ENCODE measurements at regions of chr2 and their contacts with region 1.

Region 1: GRCh38 chr2:236569573-236569973 is at the start of gene ACKR3:
- DNase-seq: peak; percentile 32 to 89 (median 81)
- ATAC-seq: peak; percentile 97
- H3K4me3 ChIP-seq: peak within 1 kb of the TSS; percentile 62
- H3K4me3 Mint-ChIP-seq: peak within 1 kb of the TSS; percentile 52 to 95 (median 88)
- H3K27ac ChIP-seq: peak within 1 kb of the TSS; percentile 37
- H3K27ac Mint-ChIP-seq: peak within 1 kb of the TSS in 7 of 9 donors; percentile 19 to 86 (median 72)
- H3K4me1 ChIP-seq: peaks cover 9 to 13% of the 10 kb centered on the region in 2 donors
- H3K4me1 Mint-ChIP-seq: peaks cover 20 to 39% (median 25%) of the 10 kb centered on the region in 7 donors
- H3K27me3 ChIP-seq: no peaks in the 10 kb centered on the region
- H3K27me3 Mint-ChIP-seq: peaks cover 0 to 21% (median 0%) of the 10 kb centered on the region in 5 donors
- total RNA-seq, gene ACKR3: 2.8 to 6.2 (median 4.9) TPM

Region 2: DNA sequence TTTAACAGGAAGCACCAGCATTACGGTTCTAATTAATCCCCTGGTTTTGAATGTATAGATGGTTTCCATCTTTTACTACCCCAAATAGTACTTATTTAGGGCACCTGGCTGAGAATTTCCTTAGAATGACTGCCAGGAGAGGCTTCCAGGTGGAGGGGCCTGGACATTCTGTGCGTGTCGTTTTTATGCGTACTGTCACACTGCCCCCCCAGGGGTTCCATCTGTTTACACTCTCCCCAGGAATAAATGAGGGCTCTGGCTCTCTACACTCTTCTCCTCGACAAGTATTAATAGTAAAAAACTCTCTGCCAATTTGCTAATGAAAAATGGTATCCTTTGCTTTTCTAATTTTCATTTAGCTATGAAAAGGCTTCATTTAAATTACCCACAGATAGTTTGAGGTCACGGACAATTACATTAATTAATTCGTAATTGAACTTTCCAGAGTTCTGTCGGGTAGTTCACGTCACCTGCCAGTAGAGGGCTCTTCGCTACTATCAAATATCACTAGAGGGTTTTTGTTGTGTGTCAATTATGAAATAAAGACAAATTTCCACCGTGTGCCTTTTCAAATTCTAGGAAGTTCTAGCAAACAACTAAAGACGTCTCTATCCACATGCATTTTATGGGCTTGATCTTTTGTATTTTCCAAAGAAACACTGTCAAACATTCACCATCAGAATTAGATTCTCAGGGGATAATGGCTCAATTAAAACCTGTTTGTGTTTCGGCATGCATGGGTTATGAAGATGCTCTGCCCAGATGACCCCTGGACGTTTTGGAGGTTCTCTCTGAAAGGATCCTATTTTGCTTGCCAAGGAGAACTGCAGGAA is 216.6 kb before region 1 on chr2:
- CTCF ChIA-PET with region 1: interaction called, 10 read pairs
- POLR2A ChIA-PET with region 1: no interaction called
- intact Hi-C with region 1: loop called (anchors 1 kb)
- DNase-seq: peak in 5 of 9 donors; percentile 29 to 48 (median 45)
- ATAC-seq: peak; percentile 50
- H3K4me3 ChIP-seq: no peak overlapping the region
- H3K4me3 Mint-ChIP-seq: no peak overlapping the region
- H3K27ac ChIP-seq: no peak overlapping the region
- H3K27ac Mint-ChIP-seq: peak overlapping the region in 1 of 9 donors; percentile 59
- H3K4me1 ChIP-seq: no peaks in the 10 kb centered on the region
- H3K4me1 Mint-ChIP-seq: peaks cover 0 to 7% (median 4%) of the 10 kb centered on the region in 7 donors
- H3K27me3 ChIP-seq: no peaks in the 10 kb centered on the region
- H3K27me3 Mint-ChIP-seq: peaks cover 0 to 14% (median 8%) of the 10 kb centered on the region in 5 donors

Region 3: DNA sequence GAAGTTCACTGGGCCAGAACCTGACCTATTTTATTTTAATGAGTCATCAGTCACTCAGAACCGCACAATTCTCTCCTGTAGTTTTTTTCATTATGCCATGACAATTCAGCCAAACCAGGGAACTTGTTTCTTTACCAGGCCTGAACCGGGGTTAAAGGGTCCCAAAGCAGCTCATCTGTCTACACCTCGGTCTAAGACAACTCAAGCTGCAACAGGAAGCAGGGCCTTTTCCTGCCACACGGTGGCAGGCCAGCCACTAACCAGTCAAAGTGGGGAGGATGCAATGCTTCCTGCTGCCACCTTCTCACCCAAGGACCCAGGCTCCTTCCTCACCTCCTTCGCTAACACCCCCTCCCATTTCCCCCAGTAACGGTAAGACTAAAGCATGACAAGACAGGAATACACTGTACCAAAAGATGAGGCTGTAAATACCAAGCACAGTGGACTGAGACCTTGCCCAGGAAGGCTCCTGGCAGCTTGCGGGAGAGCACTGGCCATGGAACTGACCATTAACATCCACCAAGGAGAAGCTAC is 56.6 kb before region 1 on chr2:
- CTCF ChIA-PET with region 1: interaction called, 156 read pairs
- POLR2A ChIA-PET with region 1: interaction called, 19 read pairs
- intact Hi-C with region 1: loop called (anchors 1 kb)
- DNase-seq: peak; percentile 44 to 74 (median 63)
- ATAC-seq: peak; percentile 94
- H3K4me3 ChIP-seq: no peak overlapping the region
- H3K4me3 Mint-ChIP-seq: no peak overlapping the region
- H3K27ac ChIP-seq: no peak overlapping the region
- H3K27ac Mint-ChIP-seq: no peak overlapping the region
- H3K4me1 ChIP-seq: peaks cover 4% of the 10 kb centered on the region in 2 donors
- H3K4me1 Mint-ChIP-seq: peaks cover 0 to 5% (median 0%) of the 10 kb centered on the region in 7 donors
- H3K27me3 ChIP-seq: no peaks in the 10 kb centered on the region
- H3K27me3 Mint-ChIP-seq: peaks cover 0 to 36% (median 0%) of the 10 kb centered on the region in 5 donors

Region 4: GRCh38 chr2:236545814-236546480 is 23.6 kb before region 1 on chr2:
- CTCF ChIA-PET with region 1: interaction called, 7 read pairs
- POLR2A ChIA-PET with region 1: interaction called, 10 read pairs
- intact Hi-C with region 1: loop called (anchors 1 kb)
- DNase-seq: peak in 3 of 9 donors; percentile 23 to 36 (median 32)
- ATAC-seq: peak; percentile 74
- H3K4me3 ChIP-seq: peak overlapping the region; percentile 34
- H3K4me3 Mint-ChIP-seq: peak overlapping the region; percentile 49 to 85 (median 68)
- H3K27ac ChIP-seq: peak overlapping the region; percentile 72
- H3K27ac Mint-ChIP-seq: peak overlapping the region; percentile 77 to 96 (median 92)
- H3K4me1 ChIP-seq: peaks cover 60% of the 10 kb centered on the region in 2 donors
- H3K4me1 Mint-ChIP-seq: peaks cover 71 to 97% (median 95%) of the 10 kb centered on the region in 7 donors
- H3K27me3 ChIP-seq: no peaks in the 10 kb centered on the region
- H3K27me3 Mint-ChIP-seq: no peaks in the 10 kb centered on the region

Region 5: DNA sequence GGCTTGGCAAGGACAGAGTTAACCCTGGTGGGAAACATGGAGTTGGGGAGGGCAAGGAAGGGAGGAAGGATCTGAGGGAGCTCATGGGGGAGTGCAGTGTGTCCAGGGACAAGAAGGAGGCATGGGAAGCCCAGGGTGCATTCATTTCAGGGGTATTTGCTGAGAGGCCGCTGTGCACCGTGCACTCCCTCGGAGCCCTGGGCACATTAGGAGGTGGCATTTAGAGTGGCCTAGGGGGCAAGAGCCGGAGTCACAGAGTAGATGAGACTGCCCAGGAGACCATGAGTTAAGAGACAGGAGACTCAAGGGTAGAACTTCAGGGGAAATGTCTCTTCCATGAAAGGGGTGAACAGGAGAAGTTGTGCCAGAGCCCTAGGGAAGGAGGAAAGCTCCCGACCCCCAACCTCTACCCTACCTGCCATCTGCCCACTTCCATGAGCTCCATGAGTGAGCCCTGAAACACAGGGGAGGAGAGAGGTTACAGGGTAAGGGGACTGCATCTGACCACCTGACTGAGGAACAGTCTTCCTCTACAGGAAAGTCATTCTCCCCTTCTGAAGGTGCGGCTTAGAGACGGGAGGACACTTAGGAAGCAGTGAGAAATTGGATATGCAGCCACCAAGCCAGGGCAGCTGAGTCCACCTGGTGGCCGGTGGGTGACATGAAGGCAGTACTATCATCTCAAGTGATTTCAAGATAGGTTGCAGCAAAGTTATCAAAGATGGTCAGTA is 457.6 kb after region 1 on chr2:
- CTCF ChIA-PET with region 1: interaction called, 9 read pairs
- POLR2A ChIA-PET with region 1: no interaction called
- intact Hi-C with region 1: loop called in 1 of 2 experiments (anchors 1 kb)
- DNase-seq: peak in 8 of 9 donors; percentile 7 to 53 (median 28)
- ATAC-seq: peak; percentile 64
- H3K4me3 ChIP-seq: no peak overlapping the region
- H3K4me3 Mint-ChIP-seq: no peak overlapping the region
- H3K27ac ChIP-seq: no peak overlapping the region
- H3K27ac Mint-ChIP-seq: no peak overlapping the region
- H3K4me1 ChIP-seq: no peaks in the 10 kb centered on the region
- H3K4me1 Mint-ChIP-seq: no peaks in the 10 kb centered on the region
- H3K27me3 ChIP-seq: no peaks in the 10 kb centered on the region
- H3K27me3 Mint-ChIP-seq: peaks cover 0 to 7% (median 0%) of the 10 kb centered on the region in 5 donors

Region 6: GRCh38 chr2:237072067-237072931 is 502.7 kb after region 1 on chr2:
- CTCF ChIA-PET with region 1: interaction called, 3 read pairs
- POLR2A ChIA-PET with region 1: no interaction called
- intact Hi-C with region 1: loop called in 1 of 2 experiments (anchors 1 kb)
- DNase-seq: peak; percentile 28 to 76 (median 51)
- ATAC-seq: peak; percentile 72
- H3K4me3 ChIP-seq: no peak overlapping the region
- H3K4me3 Mint-ChIP-seq: no peak overlapping the region
- H3K27ac ChIP-seq: no peak overlapping the region
- H3K27ac Mint-ChIP-seq: peak overlapping the region in 1 of 9 donors; percentile 25
- H3K4me1 ChIP-seq: no peaks in the 10 kb centered on the region
- H3K4me1 Mint-ChIP-seq: peaks cover 0 to 2% (median 0%) of the 10 kb centered on the region in 7 donors
- H3K27me3 ChIP-seq: no peaks in the 10 kb centered on the region
- H3K27me3 Mint-ChIP-seq: peaks cover 0 to 2% (median 0%) of the 10 kb centered on the region in 5 donors

Measured in naive thymus-derived CD4-positive, alpha-beta T cell (primary cell).